Activated CD4-positive, alpha-beta memory T cell treated with anti-CD3 and anti-CD28 coated beads for 36 hours (primary cell): ENCODE measurements at regions of chr6 and their contacts with region 1.

Region 1: DNA sequence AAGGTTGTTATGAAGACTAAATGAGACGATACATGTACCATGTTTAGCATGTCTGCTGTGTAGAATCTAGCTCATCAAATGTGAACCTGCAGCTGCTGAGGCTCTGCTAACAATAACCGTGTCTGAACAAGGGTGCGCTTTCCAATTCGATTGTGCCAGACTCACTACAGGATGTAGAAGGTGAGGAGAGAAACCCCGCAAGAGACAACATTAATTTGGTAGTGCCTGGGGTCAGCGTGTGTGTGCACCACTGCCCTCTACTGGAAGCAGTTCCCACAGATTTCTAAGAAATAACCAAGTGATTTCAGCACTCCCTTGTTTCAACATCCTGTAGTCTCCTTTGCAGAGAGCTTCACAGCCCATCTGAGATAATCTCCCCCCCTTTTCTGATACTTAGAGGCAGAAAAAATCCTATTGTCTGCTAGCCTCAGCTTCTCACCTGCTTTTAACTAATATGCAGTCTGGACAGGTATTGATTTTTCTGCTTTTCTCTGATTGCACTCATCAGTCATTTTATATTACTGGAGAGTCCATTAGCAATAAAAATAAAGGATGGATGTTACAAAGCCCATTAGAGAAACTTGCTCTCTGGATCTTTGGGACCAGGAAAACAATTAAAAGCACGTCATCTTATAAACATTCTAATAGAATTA is 96.7 kb upstream of the BACH2 start:
- DNase-seq: peak; percentile 85
- H3K4me3 Mint-ChIP-seq: no peak overlapping the region
- H3K27ac Mint-ChIP-seq: peak overlapping the region; percentile 71
- H3K4me1 Mint-ChIP-seq: peaks cover 78% of the 10 kb centered on the region
- H3K27me3 Mint-ChIP-seq: no peaks in the 10 kb centered on the region

Region 2: DNA sequence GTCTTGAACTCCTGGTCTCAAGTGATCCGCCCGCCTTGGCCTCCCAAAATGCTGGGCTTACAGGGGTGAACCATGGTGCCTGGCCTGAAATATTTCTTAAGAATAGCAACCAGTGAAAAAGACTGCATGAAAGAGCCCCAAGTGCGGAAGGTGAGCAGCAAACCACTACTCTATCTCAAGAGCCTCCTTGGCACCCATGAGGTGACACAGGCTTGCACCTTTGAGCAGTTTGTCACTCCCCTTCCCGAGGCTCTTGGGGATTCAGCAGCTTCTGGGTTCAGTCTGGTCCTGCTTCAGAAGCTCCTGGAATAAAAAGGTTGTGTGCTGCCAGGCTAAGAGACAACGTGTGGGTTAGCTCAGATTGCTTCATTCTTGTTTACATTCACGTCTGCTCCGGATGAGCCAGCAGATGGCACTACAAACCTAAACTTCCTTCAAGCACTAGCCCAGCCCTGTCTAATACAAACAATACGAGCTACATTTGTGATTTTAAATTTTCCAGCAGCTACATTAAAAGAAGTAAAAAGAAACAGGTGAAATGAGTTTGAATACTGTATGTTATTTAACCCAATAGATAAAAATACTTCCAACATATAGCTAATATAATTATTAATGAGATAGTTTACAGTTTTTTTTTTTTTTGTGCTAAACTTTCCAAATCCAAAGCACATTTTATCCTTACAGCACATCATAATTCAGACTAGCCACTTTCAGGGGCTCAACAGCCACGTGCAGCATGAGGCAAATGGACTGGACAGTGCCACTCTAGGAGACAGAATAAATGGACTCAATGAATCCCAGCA is 452.9 kb before region 1 on chr6:
- CTCF ChIA-PET with region 1: interaction called, 19 read pairs
- POLR2A ChIA-PET with region 1: no interaction called
- intact Hi-C with region 1: loop called (anchors 5 kb)
- DNase-seq: peak; percentile 78
- H3K4me3 Mint-ChIP-seq: no peak overlapping the region
- H3K27ac Mint-ChIP-seq: no peak overlapping the region
- H3K4me1 Mint-ChIP-seq: peaks cover 41% of the 10 kb centered on the region
- H3K27me3 Mint-ChIP-seq: no peaks in the 10 kb centered on the region

Region 3: DNA sequence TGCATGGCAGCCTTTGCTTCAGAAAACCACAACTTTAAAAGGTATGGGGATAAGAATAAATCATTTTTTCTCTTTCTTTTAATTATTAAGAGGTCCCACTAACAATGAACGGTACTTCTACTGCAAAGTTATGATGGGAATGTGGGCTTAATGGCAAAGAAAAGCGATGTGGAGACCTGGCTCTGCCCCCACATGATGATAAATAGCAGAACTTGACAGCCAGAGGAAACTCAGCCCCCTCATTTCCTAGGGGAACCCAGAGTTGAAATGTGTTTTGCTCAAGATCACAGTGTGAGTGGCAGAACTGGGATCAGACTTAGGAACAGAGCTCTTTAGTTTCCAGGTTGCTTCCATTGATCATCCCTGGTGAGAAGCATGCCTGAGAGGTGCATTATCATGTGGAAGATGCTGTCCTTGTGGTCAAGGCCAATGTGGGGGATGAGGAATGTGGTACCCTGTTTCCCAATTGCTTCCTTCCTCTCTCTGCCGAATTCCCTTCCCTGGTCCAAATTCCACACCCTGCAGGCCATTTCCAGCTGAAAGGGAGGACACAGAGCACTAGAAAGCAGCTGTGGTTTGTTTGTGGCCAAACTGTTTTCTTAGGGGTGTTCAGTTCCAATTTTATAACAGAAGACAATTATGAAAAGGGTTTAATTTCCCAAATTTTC is 162.7 kb before region 1 on chr6:
- CTCF ChIA-PET with region 1: interaction called, 4 read pairs
- POLR2A ChIA-PET with region 1: no interaction called
- intact Hi-C with region 1: loop called (anchors 5 kb)
- DNase-seq: no peak
- H3K4me3 Mint-ChIP-seq: no peak overlapping the region
- H3K27ac Mint-ChIP-seq: no peak overlapping the region
- H3K4me1 Mint-ChIP-seq: peaks cover 88% of the 10 kb centered on the region
- H3K27me3 Mint-ChIP-seq: no peaks in the 10 kb centered on the region

Region 4: DNA sequence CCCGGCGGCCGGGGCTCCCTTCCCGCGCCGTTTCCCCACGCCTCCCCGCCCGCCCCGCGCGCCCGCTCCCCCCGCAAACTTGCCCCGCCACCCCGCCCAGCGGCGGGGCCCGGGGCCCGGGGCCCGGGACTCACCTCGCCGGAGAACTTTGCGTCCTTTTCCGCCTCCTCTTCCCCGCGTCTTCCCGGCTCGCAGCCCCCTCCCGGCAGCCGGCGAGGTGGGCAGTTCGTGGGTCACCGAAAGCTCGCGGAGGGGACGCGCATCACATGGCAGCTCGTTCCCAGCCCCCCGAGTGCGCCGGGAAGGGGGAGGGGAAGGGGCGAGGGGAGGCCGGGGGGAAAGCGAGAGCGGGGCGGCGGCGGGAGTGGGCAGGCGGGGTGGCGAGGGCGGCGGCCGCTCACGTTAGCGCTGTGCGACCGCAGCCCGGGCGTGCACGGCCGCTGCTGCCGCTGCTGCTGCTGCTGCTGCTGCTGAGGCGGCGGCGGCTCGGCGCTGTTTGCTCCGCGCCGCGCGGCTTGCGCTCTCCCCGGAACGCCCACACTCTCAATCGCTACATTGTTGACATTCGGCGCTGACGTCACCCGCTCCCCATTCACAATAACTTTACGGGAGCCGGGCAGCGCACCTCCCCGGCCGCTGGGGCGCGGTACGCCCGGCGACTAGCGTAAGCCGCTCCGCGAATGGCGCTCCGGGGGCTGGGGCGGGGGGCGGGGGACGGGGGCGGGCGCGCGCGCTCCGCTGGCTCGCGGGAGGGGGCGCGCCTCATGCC is 96.8 kb before region 1 on chr6 and contains the start of gene BACH2:
- CTCF ChIA-PET with region 1: interaction called, 24 read pairs
- POLR2A ChIA-PET with region 1: interaction called, 23 read pairs
- intact Hi-C with region 1: loop called (anchors 1 kb)
- DNase-seq: peak; percentile 97
- H3K4me3 Mint-ChIP-seq: peak within 1 kb of the TSS; percentile 79
- H3K27ac Mint-ChIP-seq: peak within 1 kb of the TSS; percentile 86
- H3K4me1 Mint-ChIP-seq: peaks cover 32% of the 10 kb centered on the region
- H3K27me3 Mint-ChIP-seq: peaks cover 9% of the 10 kb centered on the region
- total RNA-seq, gene BACH2: 49.2 to 55.4 TPM

Region 5: GRCh38 chr6:90369024-90369519 is 24.3 kb before region 1 on chr6:
- CTCF ChIA-PET with region 1: interaction called, 14 read pairs
- POLR2A ChIA-PET with region 1: no interaction called
- intact Hi-C with region 1: loop called (anchors 1 kb)
- DNase-seq: peak; percentile 63
- H3K4me3 Mint-ChIP-seq: no peak overlapping the region
- H3K27ac Mint-ChIP-seq: peak overlapping the region; percentile 35
- H3K4me1 Mint-ChIP-seq: peaks cover 20% of the 10 kb centered on the region
- H3K27me3 Mint-ChIP-seq: no peaks in the 10 kb centered on the region

Region 6: GRCh38 chr6:90413867-90414266 is 20.5 kb after region 1 on chr6:
- CTCF ChIA-PET with region 1: interaction called, 16 read pairs
- POLR2A ChIA-PET with region 1: interaction called, 127 read pairs
- intact Hi-C with region 1: loop called (anchors 1 kb)
- DNase-seq: peak; percentile 92
- H3K4me3 Mint-ChIP-seq: peak overlapping the region; percentile 64
- H3K27ac Mint-ChIP-seq: peak overlapping the region; percentile 93
- H3K4me1 Mint-ChIP-seq: peaks cover 71% of the 10 kb centered on the region
- H3K27me3 Mint-ChIP-seq: no peaks in the 10 kb centered on the region

Region 7: DNA sequence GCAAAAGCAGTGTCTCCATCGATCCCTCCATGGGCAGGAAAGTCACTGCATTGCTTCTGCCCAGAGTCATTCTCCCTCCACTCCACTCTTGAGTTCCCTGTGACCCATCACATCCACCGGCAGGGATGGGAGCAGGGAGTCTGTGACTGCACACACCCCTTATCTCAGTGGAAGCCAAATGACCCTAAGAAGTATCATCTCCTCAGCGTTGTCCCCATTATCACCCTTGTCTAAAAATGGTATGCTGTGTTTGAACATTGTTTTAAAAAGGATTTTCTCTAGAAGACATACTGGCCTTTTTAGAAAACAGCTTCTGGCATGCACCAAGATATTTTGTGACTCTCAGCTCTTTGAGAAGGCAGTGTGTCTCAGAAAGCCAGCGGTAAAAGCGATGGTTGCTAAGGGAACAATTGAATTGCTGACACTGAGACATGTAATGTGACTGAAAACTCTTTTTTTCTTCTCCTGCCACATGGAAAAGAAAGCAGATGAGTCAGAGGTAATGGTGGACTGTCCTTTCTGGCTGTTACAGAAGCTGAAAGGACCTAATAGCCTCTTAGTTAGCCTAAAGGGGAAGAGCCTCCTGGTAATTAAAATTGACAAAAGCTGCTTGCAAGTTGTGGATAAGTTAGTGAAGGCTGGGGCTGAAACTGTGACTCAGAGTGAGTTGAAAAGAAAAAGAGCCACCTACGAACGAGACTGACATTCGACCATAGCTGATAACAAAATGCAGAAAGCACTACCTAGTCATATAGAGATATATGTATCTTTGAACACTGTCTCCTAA is 73.0 kb after region 1 on chr6:
- CTCF ChIA-PET with region 1: interaction called, 36 read pairs
- POLR2A ChIA-PET with region 1: interaction called, 32 read pairs
- intact Hi-C with region 1: loop called (anchors 2 kb)
- DNase-seq: peak; percentile 60
- H3K4me3 Mint-ChIP-seq: peak overlapping the region; percentile 27
- H3K27ac Mint-ChIP-seq: peak overlapping the region; percentile 96
- H3K4me1 Mint-ChIP-seq: peaks cover 84% of the 10 kb centered on the region
- H3K27me3 Mint-ChIP-seq: peaks cover 1% of the 10 kb centered on the region

Region 8: DNA sequence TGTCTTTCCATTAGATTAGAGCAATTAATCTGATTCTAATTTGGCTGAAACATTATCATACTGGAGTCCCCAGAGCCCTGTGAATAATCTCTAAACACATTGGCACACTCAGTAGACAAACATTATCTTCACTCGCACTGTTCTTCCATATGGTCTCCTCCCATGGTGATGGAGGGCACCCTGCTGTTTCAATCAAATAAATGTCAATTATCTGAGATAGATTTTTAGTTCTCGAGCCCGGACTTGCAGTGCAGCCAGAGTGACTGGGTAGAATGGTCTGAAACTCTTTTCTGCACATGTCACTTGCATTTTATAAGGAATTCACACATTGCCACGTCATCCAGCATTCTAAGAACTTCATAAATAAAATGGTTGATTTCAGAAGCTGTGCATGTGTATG is 284.1 kb after region 1 on chr6:
- CTCF ChIA-PET with region 1: no interaction called
- POLR2A ChIA-PET with region 1: no interaction called
- intact Hi-C with region 1: no loop called
- DNase-seq: no peak
- H3K4me3 Mint-ChIP-seq: no peak overlapping the region
- H3K27ac Mint-ChIP-seq: no peak overlapping the region
- H3K4me1 Mint-ChIP-seq: no peaks in the 10 kb centered on the region
- H3K27me3 Mint-ChIP-seq: peaks cover 13% of the 10 kb centered on the region